ENCODE measurements at regions of chr5 and their contacts with region 1.

Region 1: GRCh38 chr5:110054240-110054639 is 364.5 kb downstream of the MAN2A1 start:
- DNase-seq: peak; percentile 84 to 88 (median 86)
- H3K4me3 ChIP-seq: no peak overlapping the region
- H3K4me3 Mint-ChIP-seq: peak overlapping the region; percentile 25 to 82 (median 64)
- H3K27ac ChIP-seq: peak overlapping the region; percentile 18
- H3K27ac Mint-ChIP-seq: peak overlapping the region; percentile 59 to 96 (median 94)
- H3K4me1 ChIP-seq: peaks cover 33% of the 10 kb centered on the region
- H3K4me1 Mint-ChIP-seq: peaks cover 25 to 36% (median 31%) of the 10 kb centered on the region in 4 donors
- H3K27me3 ChIP-seq: no peaks in the 10 kb centered on the region
- H3K27me3 Mint-ChIP-seq: peaks cover 0 to 2% of the 10 kb centered on the region in 2 donors

Region 2: GRCh38 chr5:108727651-108728565 is 1326.3 kb before region 1 on chr5:
- CTCF ChIA-PET with region 1: no interaction called
- POLR2A ChIA-PET with region 1: no interaction called
- intact Hi-C with region 1: loop called (anchors 10 kb)
- DNase-seq: peak; percentile 28 to 66 (median 38)
- H3K4me3 ChIP-seq: peak overlapping the region; percentile 25 to 81
- H3K4me3 Mint-ChIP-seq: peak overlapping the region; percentile 80 to 95 (median 84)
- H3K27ac ChIP-seq: peak overlapping the region; percentile 44
- H3K27ac Mint-ChIP-seq: peak overlapping the region; percentile 75 to 95 (median 82)
- H3K4me1 ChIP-seq: peaks cover 8% of the 10 kb centered on the region
- H3K4me1 Mint-ChIP-seq: peaks cover 14 to 31% (median 23%) of the 10 kb centered on the region in 4 donors
- H3K27me3 ChIP-seq: no peaks in the 10 kb centered on the region
- H3K27me3 Mint-ChIP-seq: peaks cover 10 to 12% of the 10 kb centered on the region in 2 donors

Region 3: DNA sequence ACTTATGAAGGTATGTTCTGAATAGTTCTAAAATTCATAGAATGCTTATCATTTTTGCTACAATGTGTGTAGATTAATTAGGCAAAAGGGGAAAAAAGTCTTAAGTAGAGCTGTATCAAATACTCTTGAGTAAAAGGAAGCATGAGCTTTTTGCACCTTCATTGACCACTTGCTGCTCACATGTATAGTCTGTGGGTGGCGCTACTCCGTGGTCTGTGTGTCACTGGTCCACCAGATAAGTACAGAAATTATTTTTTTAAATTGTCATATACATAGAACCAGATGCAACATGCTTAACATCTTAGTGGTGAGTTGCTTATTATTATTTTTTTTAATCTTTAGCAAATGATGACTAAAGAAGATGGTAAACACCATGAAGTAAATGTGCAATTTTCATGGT is 234.4 kb before region 1 on chr5:
- CTCF ChIA-PET with region 1: no interaction called
- POLR2A ChIA-PET with region 1: no interaction called
- intact Hi-C with region 1: loop called (anchors 2 kb)
- DNase-seq: no peak
- H3K4me3 ChIP-seq: no peak overlapping the region
- H3K4me3 Mint-ChIP-seq: no peak overlapping the region
- H3K27ac ChIP-seq: no peak overlapping the region
- H3K27ac Mint-ChIP-seq: peak overlapping the region in 2 of 7 donors; percentile 14 to 50
- H3K4me1 ChIP-seq: no peaks in the 10 kb centered on the region
- H3K4me1 Mint-ChIP-seq: peaks cover 0 to 3% (median 1%) of the 10 kb centered on the region in 4 donors
- H3K27me3 ChIP-seq: no peaks in the 10 kb centered on the region
- H3K27me3 Mint-ChIP-seq: no peaks in the 10 kb centered on the region

Region 4: GRCh38 chr5:109852371-109853155 is 201.7 kb before region 1 on chr5:
- CTCF ChIA-PET with region 1: interaction called, 11 read pairs
- POLR2A ChIA-PET with region 1: interaction called, 5 read pairs
- intact Hi-C with region 1: loop called (anchors 5 kb)
- DNase-seq: no peak
- H3K4me3 ChIP-seq: no peak overlapping the region
- H3K4me3 Mint-ChIP-seq: peak overlapping the region in 5 of 8 donors; percentile 10 to 51 (median 28)
- H3K27ac ChIP-seq: no peak overlapping the region
- H3K27ac Mint-ChIP-seq: peak overlapping the region; percentile 16 to 77 (median 58)
- H3K4me1 ChIP-seq: peaks cover 89% of the 10 kb centered on the region
- H3K4me1 Mint-ChIP-seq: peaks cover 61 to 82% (median 68%) of the 10 kb centered on the region in 4 donors
- H3K27me3 ChIP-seq: no peaks in the 10 kb centered on the region
- H3K27me3 Mint-ChIP-seq: no peaks in the 10 kb centered on the region

Region 5: GRCh38 chr5:109921735-109922380 is 132.4 kb before region 1 on chr5:
- CTCF ChIA-PET with region 1: interaction called, 15 read pairs
- POLR2A ChIA-PET with region 1: interaction called, 16 read pairs
- intact Hi-C with region 1: loop called (anchors 1 kb)
- DNase-seq: peak; percentile 70 to 81 (median 75)
- H3K4me3 ChIP-seq: peak overlapping the region in 1 of 2 donors; percentile 4
- H3K4me3 Mint-ChIP-seq: peak overlapping the region; percentile 57 to 81 (median 74)
- H3K27ac ChIP-seq: peak overlapping the region; percentile 37
- H3K27ac Mint-ChIP-seq: peak overlapping the region; percentile 85 to 97 (median 92)
- H3K4me1 ChIP-seq: peaks cover 44% of the 10 kb centered on the region
- H3K4me1 Mint-ChIP-seq: peaks cover 32 to 46% (median 39%) of the 10 kb centered on the region in 4 donors
- H3K27me3 ChIP-seq: no peaks in the 10 kb centered on the region
- H3K27me3 Mint-ChIP-seq: no peaks in the 10 kb centered on the region

Measured in CD4-positive, alpha-beta memory T cell (primary cell).